Activated T-helper 2 cell treated with anti-CD3 and anti-CD28 coated beads, Interferon-gamma antibody, Interleukin-2, Interleukin-4, amounts not matched to agents 10 μg/mL and 5 μg/mL and 100 μg/mL, durations not matched to agents 14 hours and 24 hours and 36 hours (primary cell): ENCODE measurements at regions of chr10 and their contacts with region 1.

Region 1: DNA sequence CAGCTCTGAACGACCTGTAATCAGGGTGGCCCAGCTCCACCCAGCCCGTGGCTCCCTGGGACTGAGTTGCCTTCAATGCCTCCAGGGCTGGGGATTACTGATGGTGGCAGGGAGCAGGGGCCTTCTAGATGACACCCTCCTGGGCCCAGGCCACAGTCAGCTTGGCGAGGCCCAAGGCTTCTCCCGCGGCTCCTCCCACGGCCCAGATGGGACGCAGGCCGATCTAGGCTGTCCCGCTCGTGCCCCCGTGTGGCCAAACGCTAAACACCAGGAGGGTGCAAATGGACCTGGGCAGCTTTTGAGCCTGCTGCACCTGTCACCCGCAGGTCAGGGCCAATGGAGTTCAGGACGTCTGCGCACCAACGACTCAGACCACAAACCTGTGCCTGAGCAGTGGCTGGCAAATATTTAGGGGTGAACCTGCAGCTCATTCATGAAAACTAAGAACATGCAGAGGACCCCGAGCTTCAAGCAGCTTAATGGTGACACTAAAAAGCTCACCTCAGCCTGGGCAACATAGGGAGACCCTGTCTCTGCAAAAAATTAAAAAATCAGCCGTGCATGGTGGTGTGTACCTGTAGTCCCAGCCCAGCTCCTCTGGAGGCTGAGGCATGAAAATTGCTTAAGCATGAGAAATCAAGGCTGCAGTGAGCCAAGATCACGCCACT is 43.2 kb downstream of the ASB13 start:
- DNase-seq: peak; percentile 73
- H3K4me3 Mint-ChIP-seq: no peak overlapping the region
- H3K27ac Mint-ChIP-seq: no peak overlapping the region
- H3K4me1 Mint-ChIP-seq: peaks cover 8% of the 10 kb centered on the region
- H3K27me3 Mint-ChIP-seq: peaks cover 2% of the 10 kb centered on the region

Region 2: DNA sequence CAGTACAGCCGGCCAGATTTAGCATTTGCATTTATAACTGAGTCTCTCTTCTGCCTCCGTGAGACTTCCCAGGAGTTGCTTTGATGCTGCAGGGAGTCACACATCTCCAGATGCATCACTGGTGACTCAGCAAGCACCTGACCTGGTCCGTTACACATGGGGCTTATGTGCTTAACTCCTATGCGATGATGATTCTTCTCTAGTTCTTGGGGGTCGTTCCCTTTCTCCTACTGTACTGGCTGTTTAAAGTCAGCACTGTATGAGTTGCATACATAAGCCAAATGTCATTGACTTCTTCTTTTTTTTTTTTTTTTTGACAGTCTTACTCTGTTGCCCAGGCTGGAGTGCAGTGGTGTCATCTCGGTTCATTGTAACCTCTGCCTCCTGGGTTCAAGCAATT is 810.2 kb before region 1 on chr10:
- intact Hi-C with region 1: loop called (anchors 10 kb)
- DNase-seq: no peak
- H3K4me3 Mint-ChIP-seq: no peak overlapping the region
- H3K27ac Mint-ChIP-seq: no peak overlapping the region
- H3K4me1 Mint-ChIP-seq: no peaks in the 10 kb centered on the region
- H3K27me3 Mint-ChIP-seq: peaks cover 3% of the 10 kb centered on the region

Region 3: DNA sequence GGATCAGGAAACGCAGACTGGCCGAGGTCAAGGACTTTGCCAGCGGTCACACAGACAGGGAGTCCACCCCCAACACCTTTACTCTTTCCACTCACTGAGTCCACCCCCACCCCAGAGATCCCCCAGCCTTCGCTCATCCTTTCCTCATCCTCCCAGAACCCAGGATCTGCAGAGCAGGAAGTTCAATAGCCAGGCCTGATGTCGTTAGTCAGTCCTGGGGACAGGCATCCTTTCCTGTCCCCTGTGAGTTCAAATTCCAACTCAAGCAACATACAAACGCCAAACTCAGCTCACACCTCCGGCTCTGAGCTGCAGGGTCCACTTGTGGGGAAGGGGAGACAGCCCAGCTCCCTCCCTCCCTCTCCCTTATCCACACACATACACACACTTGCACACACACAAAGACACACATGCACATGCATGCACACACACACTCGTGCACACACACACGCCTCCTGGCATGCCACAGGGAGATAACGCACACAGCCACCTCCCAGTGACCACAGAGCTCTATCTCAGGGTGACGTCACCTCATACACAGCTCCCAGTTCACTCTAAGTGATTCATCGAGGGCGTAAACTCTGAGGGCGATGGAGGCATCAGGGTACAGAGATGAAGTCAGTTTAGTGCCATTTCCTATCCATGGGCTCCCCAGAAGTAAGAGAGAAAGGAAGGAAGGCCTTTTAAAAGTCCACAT is 74.5 kb before region 1 on chr10:
- intact Hi-C with region 1: loop called (anchors 2 kb)
- DNase-seq: peak; percentile 69
- H3K4me3 Mint-ChIP-seq: no peak overlapping the region
- H3K27ac Mint-ChIP-seq: no peak overlapping the region
- H3K4me1 Mint-ChIP-seq: peaks cover 30% of the 10 kb centered on the region
- H3K27me3 Mint-ChIP-seq: peaks cover 4% of the 10 kb centered on the region